ENCODE measurements at regions of chr1 and their contacts with region 1.

Region 1: DNA sequence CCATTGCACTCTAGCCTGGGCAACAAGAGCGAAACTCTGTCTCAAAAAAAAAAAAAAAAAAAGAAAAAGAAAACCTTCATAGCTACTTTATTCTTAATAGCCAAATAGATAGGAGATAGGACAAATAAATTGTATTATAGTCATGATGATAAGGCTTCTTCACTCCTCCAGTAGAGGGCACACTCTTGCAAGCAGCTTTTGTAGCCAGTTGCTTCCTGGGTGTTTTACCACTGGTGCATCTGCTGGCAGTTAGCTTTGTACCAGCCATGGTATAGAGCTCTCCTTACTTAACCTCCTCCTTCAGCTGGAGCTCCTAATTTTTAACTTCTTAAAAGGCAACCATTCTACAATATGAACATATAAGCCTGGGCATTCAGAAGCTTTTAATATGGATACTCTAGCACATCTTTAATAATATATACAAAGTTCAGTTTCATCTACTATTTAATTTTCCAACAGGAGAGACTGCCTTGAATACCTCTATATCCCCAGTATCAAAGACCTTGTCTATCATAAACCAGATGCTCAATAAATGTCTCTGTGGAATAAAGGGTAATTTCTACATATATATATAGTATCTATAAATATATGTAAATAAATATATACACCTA is 35.8 kb downstream of the EVI5 start:
- DNase-seq: peak; percentile 48
- ATAC-seq: peak; percentile 60
- H3K4me3 Mint-ChIP-seq: no peak overlapping the region
- H3K27ac Mint-ChIP-seq: no peak overlapping the region
- H3K4me1 Mint-ChIP-seq: no peaks in the 10 kb centered on the region
- H3K27me3 Mint-ChIP-seq: peaks cover 19% of the 10 kb centered on the region

Region 2: DNA sequence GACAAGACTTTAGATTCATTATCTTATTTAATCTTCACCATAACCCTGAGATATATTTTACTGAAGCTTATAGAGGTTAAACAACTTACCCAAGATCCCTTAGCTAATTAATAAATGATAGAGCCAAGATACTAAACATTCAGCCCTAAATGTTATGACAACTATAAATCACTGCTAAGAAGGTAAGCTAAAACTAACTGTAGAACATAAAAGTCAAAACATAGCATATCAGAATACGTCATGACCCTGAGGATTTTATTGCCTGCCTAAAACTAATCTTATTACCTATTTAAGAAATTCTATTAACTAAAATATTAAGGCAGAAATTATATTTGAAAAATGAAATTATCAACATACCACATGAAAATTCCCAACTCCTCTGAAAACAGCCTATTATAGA is 13.2 kb after region 1 on chr1:
- CTCF ChIA-PET with region 1: interaction called, 11 read pairs
- DNase-seq: no peak
- ATAC-seq: no peak
- H3K4me3 Mint-ChIP-seq: no peak overlapping the region
- H3K27ac Mint-ChIP-seq: no peak overlapping the region
- H3K4me1 Mint-ChIP-seq: no peaks in the 10 kb centered on the region
- H3K27me3 Mint-ChIP-seq: peaks cover 31% of the 10 kb centered on the region

Region 3: GRCh38 chr1:92817986-92818764 is 69.0 kb after region 1 on chr1:
- CTCF ChIA-PET with region 1: interaction called, 67 read pairs
- DNase-seq: no peak
- ATAC-seq: peak; percentile 61
- H3K4me3 Mint-ChIP-seq: no peak overlapping the region
- H3K27ac Mint-ChIP-seq: no peak overlapping the region
- H3K4me1 Mint-ChIP-seq: no peaks in the 10 kb centered on the region
- H3K27me3 Mint-ChIP-seq: peaks cover 33% of the 10 kb centered on the region